Naive thymus-derived CD4-positive, alpha-beta T cell (primary cell): ENCODE measurements at regions of chr16 and their contacts with region 1.

Region 1: GRCh38 chr16:67226804-67227557 is at the start of gene TMEM208:
- DNase-seq: peak; percentile 94 to 99 (median 97)
- ATAC-seq: peak; percentile 99
- H3K4me3 ChIP-seq: peak within 1 kb of the TSS; percentile 90
- H3K4me3 Mint-ChIP-seq: peak within 1 kb of the TSS; percentile 94 to 100 (median 98)
- H3K27ac ChIP-seq: peak within 1 kb of the TSS; percentile 85
- H3K27ac Mint-ChIP-seq: peak within 1 kb of the TSS; percentile 93 to 100 (median 99)
- H3K4me1 ChIP-seq: peaks cover 14 to 38% of the 10 kb centered on the region in 2 donors
- H3K4me1 Mint-ChIP-seq: peaks cover 37 to 62% (median 50%) of the 10 kb centered on the region in 7 donors
- H3K27me3 ChIP-seq: no peaks in the 10 kb centered on the region
- H3K27me3 Mint-ChIP-seq: no peaks in the 10 kb centered on the region
- total RNA-seq, gene TMEM208: 27.6 to 44.8 (median 32.7) TPM

Region 2: GRCh38 chr16:67109407-67110135 is 117.4 kb before region 1 on chr16 and contains the start of gene PHAF1:
- CTCF ChIA-PET with region 1: no interaction called
- POLR2A ChIA-PET with region 1: no interaction called
- intact Hi-C with region 1: loop called in 1 of 2 experiments (anchors 1 kb)
- DNase-seq: peak; percentile 93 to 99 (median 97)
- ATAC-seq: peak; percentile 95
- H3K4me3 ChIP-seq: peak within 1 kb of the TSS; percentile 91
- H3K4me3 Mint-ChIP-seq: peak within 1 kb of the TSS; percentile 91 to 96 (median 94)
- H3K27ac ChIP-seq: peak within 1 kb of the TSS; percentile 78
- H3K27ac Mint-ChIP-seq: peak within 1 kb of the TSS; percentile 81 to 95 (median 87)
- H3K4me1 ChIP-seq: peaks cover 9 to 11% of the 10 kb centered on the region in 2 donors
- H3K4me1 Mint-ChIP-seq: peaks cover 19 to 43% (median 31%) of the 10 kb centered on the region in 7 donors
- H3K27me3 ChIP-seq: no peaks in the 10 kb centered on the region
- H3K27me3 Mint-ChIP-seq: no peaks in the 10 kb centered on the region
- total RNA-seq, gene PHAF1: 17.8 to 29.6 (median 21.2) TPM

Region 3: GRCh38 chr16:67191995-67192681 is 34.8 kb before region 1 on chr16 and contains the start of gene E2F4:
- CTCF ChIA-PET with region 1: no interaction called
- POLR2A ChIA-PET with region 1: interaction called, 7 read pairs
- intact Hi-C with region 1: loop called (anchors 1 kb)
- DNase-seq: peak; percentile 72 to 88 (median 80)
- ATAC-seq: peak; percentile 97
- H3K4me3 ChIP-seq: peak within 1 kb of the TSS; percentile 72
- H3K4me3 Mint-ChIP-seq: peak within 1 kb of the TSS; percentile 83 to 93 (median 92)
- H3K27ac ChIP-seq: peak within 1 kb of the TSS; percentile 94
- H3K27ac Mint-ChIP-seq: peak within 1 kb of the TSS; percentile 53 to 95 (median 91)
- H3K4me1 ChIP-seq: peaks cover 22 to 26% of the 10 kb centered on the region in 2 donors
- H3K4me1 Mint-ChIP-seq: peaks cover 22 to 50% (median 46%) of the 10 kb centered on the region in 7 donors
- H3K27me3 ChIP-seq: no peaks in the 10 kb centered on the region
- H3K27me3 Mint-ChIP-seq: peaks cover 0 to 3% (median 0%) of the 10 kb centered on the region in 5 donors
- total RNA-seq, gene E2F4: 67.1 to 133 (median 73.0) TPM

Region 4: GRCh38 chr16:67660564-67661028 is 433.6 kb after region 1 on chr16 and contains the start of gene PARD6A:
- CTCF ChIA-PET with region 1: no interaction called
- POLR2A ChIA-PET with region 1: no interaction called
- intact Hi-C with region 1: loop called in 1 of 2 experiments (anchors 2 kb)
- DNase-seq: peak; percentile 81 to 95 (median 93)
- ATAC-seq: peak; percentile 89
- H3K4me3 ChIP-seq: peak within 1 kb of the TSS; percentile 99
- H3K4me3 Mint-ChIP-seq: peak within 1 kb of the TSS; percentile 90 to 97 (median 94)
- H3K27ac ChIP-seq: peak within 1 kb of the TSS; percentile 97
- H3K27ac Mint-ChIP-seq: peak within 1 kb of the TSS; percentile 84 to 98 (median 97)
- H3K4me1 ChIP-seq: peaks cover 11 to 17% of the 10 kb centered on the region in 2 donors
- H3K4me1 Mint-ChIP-seq: peaks cover 15 to 40% (median 22%) of the 10 kb centered on the region in 7 donors
- H3K27me3 ChIP-seq: no peaks in the 10 kb centered on the region
- H3K27me3 Mint-ChIP-seq: no peaks in the 10 kb centered on the region
- total RNA-seq, gene PARD6A: 4.5 to 11.2 (median 4.7) TPM

Region 5: GRCh38 chr16:69132424-69133252 is 1905.7 kb after region 1 on chr16 and contains the starts of genes CHTF8 and UTP4:
- CTCF ChIA-PET with region 1: no interaction called
- POLR2A ChIA-PET with region 1: no interaction called
- intact Hi-C with region 1: loop called in 1 of 2 experiments (anchors 5 kb)
- DNase-seq: peak; percentile 81 to 91 (median 87)
- ATAC-seq: peak; percentile 95
- H3K4me3 ChIP-seq: peak within 1 kb of the TSS; percentile 80
- H3K4me3 Mint-ChIP-seq: peak within 1 kb of the TSS; percentile 91 to 97 (median 94)
- H3K27ac ChIP-seq: peak within 1 kb of the TSS; percentile 88
- H3K27ac Mint-ChIP-seq: peak within 1 kb of the TSS; percentile 85 to 97 (median 95)
- H3K4me1 ChIP-seq: peaks cover 12 to 23% of the 10 kb centered on the region in 2 donors
- H3K4me1 Mint-ChIP-seq: peaks cover 16 to 71% (median 61%) of the 10 kb centered on the region in 7 donors
- H3K27me3 ChIP-seq: no peaks in the 10 kb centered on the region
- H3K27me3 Mint-ChIP-seq: no peaks in the 10 kb centered on the region
- total RNA-seq, gene CHTF8: 53.3 to 142 (median 133) TPM
- total RNA-seq, gene UTP4: 31.9 to 56.5 (median 35.1) TPM